ENCODE measurements at regions of chr2 and their contacts with region 1.

Region 1: GRCh38 chr2:25362049-25362433 is 20.3 kb upstream of the DNMT3A start:
- DNase-seq: peak; percentile 97
- ATAC-seq: peak; percentile 93
- H3K4me3 Mint-ChIP-seq: peak overlapping the region; percentile 80
- H3K27ac Mint-ChIP-seq: peak overlapping the region; percentile 97
- H3K4me1 Mint-ChIP-seq: peaks cover 17% of the 10 kb centered on the region
- H3K27me3 Mint-ChIP-seq: no peaks in the 10 kb centered on the region
- CTCF ChIP-seq: peak; percentile 90

Region 2: GRCh38 chr2:25309402-25309801 is 52.6 kb before region 1 on chr2:
- CTCF ChIA-PET with region 1: interaction called, 15 read pairs
- POLR2A ChIA-PET with region 1: interaction called, 3 read pairs
- intact Hi-C with region 1: no loop called
- DNase-seq: peak; percentile 81
- ATAC-seq: peak; percentile 18
- H3K4me3 Mint-ChIP-seq: no peak overlapping the region
- H3K27ac Mint-ChIP-seq: peak overlapping the region; percentile 71
- H3K4me1 Mint-ChIP-seq: peaks cover 77% of the 10 kb centered on the region
- H3K27me3 Mint-ChIP-seq: no peaks in the 10 kb centered on the region
- CTCF ChIP-seq: peak; percentile 50

Region 3: DNA sequence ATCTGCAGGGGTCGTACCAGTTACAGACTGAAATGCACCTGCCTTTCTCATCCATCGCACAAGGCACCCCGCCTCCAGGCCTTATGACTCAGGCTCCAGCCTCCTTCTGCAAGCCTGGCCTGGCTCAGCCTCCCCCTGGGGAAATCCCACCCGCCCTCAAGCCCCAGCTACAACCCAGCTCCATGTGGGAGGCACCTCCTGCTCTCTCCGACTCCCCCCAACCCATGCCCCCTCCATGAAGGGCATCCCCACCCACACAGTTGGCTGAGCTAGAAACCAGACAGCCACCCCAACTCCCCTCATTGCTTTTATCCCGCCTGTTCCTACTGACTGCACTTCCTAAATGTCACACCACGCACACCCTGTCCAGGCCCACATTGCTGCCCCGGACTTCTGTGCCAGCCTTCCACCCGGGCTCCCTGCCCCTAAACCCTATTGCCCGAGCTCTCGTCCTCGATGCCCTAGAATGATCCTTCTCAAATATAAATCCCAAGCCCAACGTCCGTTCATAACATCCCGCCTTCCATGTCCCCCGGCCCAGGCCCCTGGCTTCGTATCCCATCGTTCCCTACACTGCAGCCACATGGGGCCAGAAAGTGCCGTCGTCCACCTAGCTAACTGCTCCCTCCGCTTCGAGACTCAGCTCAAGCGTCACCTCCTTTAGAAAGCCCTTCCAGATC is 30.2 kb before region 1 on chr2:
- CTCF ChIA-PET with region 1: interaction called, 19 read pairs
- POLR2A ChIA-PET with region 1: interaction called, 3 read pairs
- intact Hi-C with region 1: no loop called
- DNase-seq: peak; percentile 89
- ATAC-seq: peak; percentile 91
- H3K4me3 Mint-ChIP-seq: no peak overlapping the region
- H3K27ac Mint-ChIP-seq: peak overlapping the region; percentile 80
- H3K4me1 Mint-ChIP-seq: peaks cover 71% of the 10 kb centered on the region
- H3K27me3 Mint-ChIP-seq: no peaks in the 10 kb centered on the region
- CTCF ChIP-seq: no peak

Region 4: DNA sequence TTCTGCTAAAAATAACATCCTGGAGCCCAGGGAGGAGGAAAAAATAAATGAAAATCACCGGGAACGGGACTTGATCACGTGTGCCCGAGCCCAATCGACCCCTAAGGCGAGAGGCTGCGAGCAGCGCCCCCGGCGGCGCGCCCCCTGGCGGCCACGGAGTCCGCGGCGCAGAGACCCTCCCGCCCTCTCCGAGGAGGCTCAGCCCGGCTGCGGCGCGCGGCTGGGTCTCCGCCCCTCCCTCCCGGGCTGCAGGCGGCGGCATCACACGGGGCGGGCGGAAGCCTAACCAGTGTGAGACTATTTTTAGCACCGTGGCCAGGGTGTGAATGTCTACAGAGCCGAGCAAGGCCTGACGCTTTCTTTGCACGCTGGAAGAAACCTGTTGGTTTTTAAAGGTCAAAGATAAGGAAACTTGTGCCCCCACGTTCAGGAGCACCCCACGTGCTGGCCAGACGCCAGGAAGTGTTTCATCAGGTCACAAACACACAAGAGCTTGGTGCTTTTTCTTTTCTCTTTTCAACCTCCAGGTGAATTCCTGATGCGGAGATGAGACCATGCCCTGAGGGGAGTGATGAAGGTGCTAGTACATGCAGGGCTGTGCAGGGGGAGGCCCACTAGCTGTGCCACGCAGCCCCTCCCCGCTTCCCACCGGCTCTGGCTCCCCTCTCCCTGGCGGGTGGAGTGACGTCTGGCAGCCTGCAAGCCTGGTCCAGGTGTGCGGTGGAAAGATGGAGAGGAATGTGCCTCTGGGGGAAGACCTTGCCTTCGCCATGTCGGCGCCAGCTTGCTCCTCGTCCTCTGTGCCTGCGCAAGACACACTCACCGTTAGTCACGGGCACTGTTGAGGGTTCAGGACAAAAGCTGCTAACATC is 14.9 kb after region 1 on chr2:
- CTCF ChIA-PET with region 1: interaction called, 121 read pairs
- POLR2A ChIA-PET with region 1: interaction called, 22 read pairs
- intact Hi-C with region 1: loop called (anchors 1 kb)
- DNase-seq: peak; percentile 99
- ATAC-seq: peak; percentile 97
- H3K4me3 Mint-ChIP-seq: peak overlapping the region; percentile 79
- H3K27ac Mint-ChIP-seq: peak overlapping the region; percentile 97
- H3K4me1 Mint-ChIP-seq: peaks cover 42% of the 10 kb centered on the region
- H3K27me3 Mint-ChIP-seq: no peaks in the 10 kb centered on the region
- CTCF ChIP-seq: peak; percentile 95

Region 5: DNA sequence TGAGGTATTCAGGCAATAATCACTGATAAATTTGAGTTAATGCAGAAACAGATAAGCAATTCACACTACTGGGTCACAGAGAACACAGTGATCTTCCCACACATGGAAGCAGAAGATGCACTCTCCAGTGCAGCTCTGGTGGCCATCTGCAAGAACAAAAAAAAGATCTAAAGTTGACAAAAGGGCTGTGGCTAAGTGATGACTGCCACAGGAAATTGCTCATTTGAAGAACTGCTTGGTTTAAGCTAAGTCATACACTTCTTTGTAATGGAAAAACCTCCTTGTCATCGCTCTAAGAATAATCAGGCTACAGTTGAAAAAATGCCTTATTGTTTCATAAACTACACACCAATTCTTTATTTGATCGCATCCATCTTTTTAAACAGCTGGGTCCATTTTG is 196.2 kb after region 1 on chr2:
- CTCF ChIA-PET with region 1: interaction called, 7 read pairs
- POLR2A ChIA-PET with region 1: no interaction called
- intact Hi-C with region 1: loop called (anchors 5 kb)
- DNase-seq: peak; percentile 71
- ATAC-seq: peak; percentile 80
- H3K4me3 Mint-ChIP-seq: no peak overlapping the region
- H3K27ac Mint-ChIP-seq: peak overlapping the region; percentile 81
- H3K4me1 Mint-ChIP-seq: peaks cover 59% of the 10 kb centered on the region
- H3K27me3 Mint-ChIP-seq: no peaks in the 10 kb centered on the region
- CTCF ChIP-seq: no peak